Transverse colon (tissue), 4 donors: ENCODE measurements at regions of chrX and their contacts with region 1.

Region 1: DNA sequence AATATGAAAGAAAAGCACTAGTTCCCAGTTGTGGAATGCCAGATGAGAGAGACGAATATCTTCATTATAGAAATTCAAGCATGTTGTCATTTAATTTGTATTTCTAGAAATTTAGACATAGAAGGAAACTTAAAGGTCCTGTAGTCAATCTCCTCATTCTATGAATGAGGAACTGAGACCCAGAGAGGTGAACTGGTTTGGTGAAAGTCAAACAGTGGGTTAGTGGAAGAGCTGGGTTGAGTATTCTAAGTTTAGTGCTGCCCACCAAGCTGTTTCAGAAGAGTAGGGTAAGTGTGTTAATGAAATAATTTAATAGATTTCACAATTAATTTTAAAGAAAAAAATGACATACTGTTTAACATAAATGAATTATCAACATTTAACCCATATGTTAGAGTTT is 655.2 kb downstream of the FAM133A start:
- DNase-seq: no peak
- H3K4me3 ChIP-seq: no peak overlapping the region
- H3K27ac ChIP-seq: no peak overlapping the region
- H3K4me1 ChIP-seq: no peaks in the 10 kb centered on the region
- H3K27me3 ChIP-seq: no peaks in the 10 kb centered on the region
- CTCF ChIP-seq: no peak
- EP300 ChIP-seq: no peak
- POLR2A ChIP-seq: no peak

Region 2: GRCh38 chrX:94743478-94743877 is 414.3 kb after region 1 on chrX:
- in situ Hi-C with region 1: no loop called
- intact Hi-C with region 1: loop called (anchors 10 kb)
- DNase-seq: no peak
- H3K4me3 ChIP-seq: no peak overlapping the region
- H3K27ac ChIP-seq: no peak overlapping the region
- H3K4me1 ChIP-seq: no peaks in the 10 kb centered on the region
- H3K27me3 ChIP-seq: no peaks in the 10 kb centered on the region
- CTCF ChIP-seq: no peak
- EP300 ChIP-seq: no peak
- POLR2A ChIP-seq: no peak